ENCODE measurements at regions of chr19 and their contacts with region 1.

Region 1: GRCh38 chr19:31938675-31939074 is 406.7 kb upstream of the ZNF507 start:
- DNase-seq: no peak
- ATAC-seq: no peak

Region 2: GRCh38 chr19:31956771-31957392 is 18.2 kb after region 1 on chr19:
- intact Hi-C with region 1: loop called (anchors 1 kb)
- DNase-seq: no peak
- ATAC-seq: no peak

Measured in Right ventricle myocardium inferior (tissue), 1 donor.